ENCODE measurements at regions of chr3 and their contacts with region 1.

Region 1: GRCh38 chr3:196609343-196609775 is 30.1 kb upstream of the NRROS start:
- DNase-seq: peak; percentile 93 to 96 (median 94)
- ATAC-seq: peak; percentile 96
- H3K4me3 ChIP-seq: no peak overlapping the region
- H3K27ac ChIP-seq: no peak overlapping the region; the same call in 2 of the 3 replicates
- H3K4me1 ChIP-seq: peaks cover 11 to 20% of the 10 kb centered on the region in 2 experiments
- H3K27me3 ChIP-seq: no peaks in the 10 kb centered on the region
- CTCF ChIP-seq: peak; percentile 81 to 94 (median 92)
- EP300 ChIP-seq: 0 out of 2 replicates have a peak, but pooled peaks have one; percentile 8
- POLR2A ChIP-seq: no peak
- RAD21 ChIP-seq: peak; percentile 94 to 98

Region 2: GRCh38 chr3:196528639-196529233 is 80.6 kb before region 1 on chr3:
- CTCF ChIA-PET with region 1: no interaction called
- POLR2A ChIA-PET with region 1: no interaction called
- in situ Hi-C with region 1: no loop called
- intact Hi-C with region 1: loop called (anchors 2 kb)
- DNase-seq: peak; percentile 88 to 90 (median 90)
- ATAC-seq: peak; percentile 98
- H3K4me3 ChIP-seq: peak overlapping the region; percentile 53
- H3K27ac ChIP-seq: peak overlapping the region; percentile 81
- H3K4me1 ChIP-seq: peaks cover 8 to 22% of the 10 kb centered on the region in 2 experiments; a peak in 4 of 5 replicates
- H3K27me3 ChIP-seq: no peaks in the 10 kb centered on the region
- CTCF ChIP-seq: peak; percentile 81 to 87 (median 84)
- EP300 ChIP-seq: no peak
- POLR2A ChIP-seq: peak; percentile 74
- RAD21 ChIP-seq: peak; percentile 77 to 79

Region 3: DNA sequence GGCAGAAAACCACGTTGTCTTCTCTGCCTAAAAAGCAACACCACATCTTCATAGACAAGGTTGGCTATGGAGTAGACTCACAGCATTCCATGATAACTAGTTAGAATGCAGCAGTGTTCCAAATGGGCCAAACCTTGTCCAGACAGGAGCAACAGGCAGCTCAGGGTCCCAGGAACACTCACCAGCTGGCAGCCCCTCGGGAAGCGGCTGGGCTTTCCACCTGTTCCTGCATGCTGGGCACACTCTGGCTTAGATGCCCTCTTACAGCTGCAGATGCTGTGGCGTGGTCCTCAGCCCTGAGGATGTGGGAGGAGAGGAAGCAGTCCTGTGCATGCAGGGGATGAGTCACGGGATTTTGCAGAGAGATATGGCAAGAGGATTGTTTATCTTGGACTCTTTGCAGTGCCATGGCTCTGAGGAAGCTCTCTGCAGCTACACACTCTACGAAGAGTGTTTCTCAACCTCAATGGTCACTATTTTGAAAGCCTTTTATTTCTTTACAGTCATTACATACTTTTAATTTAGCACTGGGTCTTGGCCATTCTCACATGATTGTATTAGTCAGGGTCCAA is 41.5 kb after region 1 on chr3:
- CTCF ChIA-PET with region 1: no interaction called
- POLR2A ChIA-PET with region 1: no interaction called
- in situ Hi-C with region 1: no loop called
- intact Hi-C with region 1: loop called (anchors 5 kb)
- DNase-seq: peak; percentile 42 to 90 (median 65)
- ATAC-seq: peak; percentile 97
- H3K4me3 ChIP-seq: no peak overlapping the region
- H3K27ac ChIP-seq: 0 out of 3 replicates have a peak overlapping the region, but pooled peaks have one; percentile 38
- H3K4me1 ChIP-seq: peaks cover 14 to 27% of the 10 kb centered on the region in 2 experiments
- H3K27me3 ChIP-seq: no peaks in the 10 kb centered on the region
- CTCF ChIP-seq: no peak
- EP300 ChIP-seq: peak; percentile 79; the same call in 1 of the 2 replicates
- POLR2A ChIP-seq: no peak
- RAD21 ChIP-seq: no peak

Region 4: DNA sequence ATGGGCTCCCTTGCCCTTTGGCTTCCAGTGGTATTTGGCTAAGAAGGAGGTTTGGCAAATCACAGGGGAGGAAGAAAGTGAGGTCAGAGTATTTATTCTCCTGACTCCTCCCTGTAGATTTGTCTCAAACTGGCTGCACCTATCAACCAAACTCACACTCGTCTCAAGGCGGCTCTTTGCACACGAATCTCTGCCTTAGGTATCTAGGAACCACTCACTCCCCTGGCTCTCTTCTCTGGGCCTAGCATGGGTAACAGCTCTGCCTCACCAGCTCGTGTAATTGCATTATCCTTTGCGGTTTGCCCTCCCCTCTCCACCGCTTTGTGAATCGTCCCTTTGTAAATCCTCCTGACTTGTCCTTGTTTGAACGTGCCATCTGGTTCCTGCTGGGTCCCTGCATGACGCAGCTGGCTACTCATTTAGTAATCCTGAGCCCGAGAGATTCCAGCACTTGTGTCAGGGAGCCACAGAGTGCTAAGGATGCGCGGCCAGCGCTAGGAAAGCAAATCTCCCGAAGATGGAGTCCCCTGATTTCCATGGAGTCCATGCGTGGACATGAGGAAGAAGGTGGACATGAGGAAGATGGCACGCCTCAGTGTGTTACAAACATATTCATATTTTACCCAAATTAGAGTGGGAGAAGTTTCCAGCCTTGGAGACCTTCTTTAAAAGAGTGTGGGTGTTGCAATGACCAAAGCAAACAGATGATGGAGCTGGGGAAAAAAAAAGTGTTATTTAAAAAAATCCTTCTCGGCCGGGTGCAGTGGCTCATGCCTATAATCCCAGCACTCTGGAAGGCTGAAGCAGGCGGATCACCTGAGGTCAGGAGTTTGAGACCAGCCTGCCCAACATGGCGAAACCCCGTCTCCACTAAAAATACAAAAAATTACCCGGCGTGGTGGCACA is 56.9 kb after region 1 on chr3:
- CTCF ChIA-PET with region 1: no interaction called
- POLR2A ChIA-PET with region 1: no interaction called
- in situ Hi-C with region 1: no loop called
- intact Hi-C with region 1: no loop called
- DNase-seq: no peak
- ATAC-seq: no peak; the same call in none of the 3 replicates
- H3K4me3 ChIP-seq: no peak overlapping the region
- H3K27ac ChIP-seq: no peak overlapping the region
- H3K4me1 ChIP-seq: peaks cover 22 to 25% of the 10 kb centered on the region in 2 experiments
- H3K27me3 ChIP-seq: no peaks in the 10 kb centered on the region
- CTCF ChIP-seq: no peak
- EP300 ChIP-seq: no peak
- POLR2A ChIP-seq: no peak
- RAD21 ChIP-seq: no peak

Region 5: DNA sequence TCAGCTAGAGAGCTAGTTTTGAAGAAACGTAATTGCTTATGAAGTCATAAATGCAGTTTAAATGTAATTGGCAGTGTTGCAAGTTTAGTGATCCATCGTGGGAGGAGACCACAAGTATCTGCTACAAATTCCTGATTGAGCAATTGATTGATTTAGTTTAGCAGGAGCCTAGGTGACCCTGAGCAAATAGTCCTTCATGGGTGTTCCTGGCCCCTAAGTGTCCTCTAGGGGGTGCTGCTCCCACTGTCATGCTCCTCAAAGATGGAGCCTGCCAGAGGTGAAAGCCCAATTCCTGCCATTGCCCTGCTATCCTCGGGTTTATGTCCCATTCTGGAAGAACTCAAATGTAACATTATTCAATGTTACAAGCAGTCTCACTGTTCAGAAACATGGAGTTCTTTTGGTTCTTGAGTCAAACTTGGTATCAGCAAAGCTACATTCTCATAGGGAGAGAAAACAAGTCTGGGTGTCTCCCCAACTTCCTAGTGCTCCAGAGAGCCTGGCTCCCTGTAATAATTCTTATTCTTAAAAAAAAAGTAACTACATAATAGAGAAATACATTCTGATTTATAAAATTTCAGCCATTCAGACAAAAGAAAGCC is 228.6 kb after region 1 on chr3:
- CTCF ChIA-PET with region 1: no interaction called
- POLR2A ChIA-PET with region 1: no interaction called
- in situ Hi-C with region 1: no loop called
- intact Hi-C with region 1: loop called (anchors 5 kb)
- DNase-seq: peak; percentile 72 to 84 (median 78)
- ATAC-seq: peak; percentile 83
- H3K4me3 ChIP-seq: no peak overlapping the region
- H3K27ac ChIP-seq: no peak overlapping the region
- H3K4me1 ChIP-seq: peaks cover 3 to 8% of the 10 kb centered on the region in 2 experiments; a peak in 4 of 5 replicates
- H3K27me3 ChIP-seq: no peaks in the 10 kb centered on the region
- CTCF ChIP-seq: peak; percentile 78 to 92 (median 90)
- EP300 ChIP-seq: no peak
- POLR2A ChIP-seq: no peak
- RAD21 ChIP-seq: peak; percentile 78 to 86

Region 6: GRCh38 chr3:196969660-196970546 is 360.5 kb after region 1 on chr3:
- CTCF ChIA-PET with region 1: interaction called, 9 read pairs
- POLR2A ChIA-PET with region 1: no interaction called
- in situ Hi-C with region 1: loop called (anchors 10 kb)
- intact Hi-C with region 1: loop called (anchors 2 kb)
- DNase-seq: peak; percentile 82 to 90 (median 88)
- ATAC-seq: peak; percentile 86
- H3K4me3 ChIP-seq: peak overlapping the region; percentile 71
- H3K27ac ChIP-seq: peak overlapping the region; percentile 94
- H3K4me1 ChIP-seq: peaks cover 20 to 32% of the 10 kb centered on the region in 2 experiments; a peak in 4 of 5 replicates
- H3K27me3 ChIP-seq: no peaks in the 10 kb centered on the region
- CTCF ChIP-seq: peak; percentile 57 to 97 (median 76)
- EP300 ChIP-seq: no peak
- POLR2A ChIP-seq: no peak
- RAD21 ChIP-seq: peak; percentile 78 to 90

Measured in K562 (cell line).